ENCODE measurements at regions of chr14 and their contacts with region 1.

Region 1: DNA sequence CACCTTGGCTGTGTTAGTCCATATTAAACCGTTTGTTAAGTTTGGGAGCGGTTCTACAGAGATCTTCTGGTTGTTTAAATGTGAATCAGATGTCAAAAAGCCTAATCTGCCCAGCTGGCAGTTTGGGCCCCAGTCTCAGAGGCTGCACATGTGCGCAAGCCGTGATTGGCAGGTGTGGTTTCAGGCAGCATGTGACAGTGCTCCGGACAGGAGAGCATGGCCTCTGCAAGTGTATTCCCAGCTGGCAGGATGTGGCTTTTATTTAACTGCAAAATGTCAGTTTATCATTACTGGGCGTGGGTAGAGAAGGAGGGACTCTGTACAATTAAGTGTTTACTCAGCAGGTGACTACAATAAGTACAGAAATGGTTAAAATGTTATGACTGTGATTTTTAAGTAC is 77.5 kb downstream of the PELI2 start:
- DNase-seq: peak; percentile 95
- H3K4me3 ChIP-seq: peak overlapping the region; percentile 28
- H3K27ac ChIP-seq: peak overlapping the region; percentile 95
- H3K4me1 ChIP-seq: peaks cover 33% of the 10 kb centered on the region
- CTCF ChIP-seq: no peak

Region 2: GRCh38 chr14:56117765-56118610 is 77.7 kb before region 1 on chr14 and contains the start of gene PELI2:
- CTCF ChIA-PET with region 1: no interaction called
- POLR2A ChIA-PET with region 1: no interaction called
- intact Hi-C with region 1: loop called (anchors 2 kb)
- DNase-seq: peak; percentile 77
- H3K4me3 ChIP-seq: peak within 1 kb of the TSS; percentile 85
- H3K27ac ChIP-seq: no peak within 1 kb of the TSS
- H3K4me1 ChIP-seq: peaks cover 4% of the 10 kb centered on the region
- CTCF ChIP-seq: no peak
- total RNA-seq, gene PELI2: 3.2 and 3.8 TPM in 2 replicates

Region 3: DNA sequence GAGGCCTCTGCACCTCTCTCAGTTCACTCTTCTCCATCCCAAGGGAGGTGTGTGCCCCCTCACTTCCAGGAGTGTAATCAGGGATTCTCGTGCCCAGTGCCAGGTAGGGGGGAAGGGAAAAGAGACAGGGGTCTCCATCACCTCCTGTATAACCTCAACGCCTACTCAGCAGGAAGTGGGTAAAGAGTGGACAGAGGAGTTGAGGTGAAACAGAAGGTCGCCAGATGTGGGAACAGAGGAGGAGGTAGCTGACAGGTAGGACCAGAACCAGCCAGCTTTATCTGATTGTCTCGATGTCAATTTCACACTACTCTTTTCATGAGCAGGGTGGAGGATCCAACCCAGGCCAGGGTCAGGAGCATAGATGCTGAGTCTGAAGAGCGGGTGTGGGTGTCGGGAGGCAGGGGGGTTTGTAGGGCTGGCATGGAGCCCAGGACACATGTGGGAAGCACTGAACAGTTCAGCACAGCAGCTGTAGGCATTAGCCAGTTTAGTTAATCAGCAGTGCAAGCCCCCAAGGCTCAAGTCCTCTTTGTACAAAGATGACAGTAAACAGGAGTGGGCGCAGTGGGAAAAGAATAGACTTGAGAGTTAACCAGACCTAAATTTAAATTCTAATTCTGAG is 136.0 kb after region 1 on chr14:
- CTCF ChIA-PET with region 1: no interaction called
- POLR2A ChIA-PET with region 1: no interaction called
- intact Hi-C with region 1: no loop called
- DNase-seq: no peak
- H3K4me3 ChIP-seq: no peak overlapping the region
- H3K27ac ChIP-seq: no peak overlapping the region
- H3K4me1 ChIP-seq: no peaks in the 10 kb centered on the region
- CTCF ChIP-seq: no peak

Region 4: DNA sequence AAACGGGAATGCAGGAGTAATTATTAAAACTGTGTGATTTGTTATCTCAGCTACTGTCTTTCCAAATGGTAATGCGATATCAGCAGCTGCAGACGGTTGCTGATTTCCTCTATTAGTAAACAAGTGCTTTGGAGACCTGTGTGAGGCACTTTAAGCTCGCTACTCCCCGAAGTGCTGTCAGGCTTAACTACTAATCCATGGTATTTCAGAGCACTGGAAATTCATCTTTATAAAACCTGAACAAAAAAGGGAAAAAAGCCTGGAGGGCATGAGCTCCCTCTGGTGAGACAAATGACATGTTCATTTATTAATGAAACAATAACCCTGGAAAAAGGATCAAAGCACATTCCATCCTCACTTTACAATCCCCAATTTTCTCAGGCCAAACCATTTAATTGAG is 758.2 kb after region 1 on chr14:
- CTCF ChIA-PET with region 1: no interaction called
- POLR2A ChIA-PET with region 1: interaction called, 12 read pairs
- intact Hi-C with region 1: no loop called
- DNase-seq: no peak
- H3K4me3 ChIP-seq: no peak overlapping the region
- H3K27ac ChIP-seq: no peak overlapping the region
- H3K4me1 ChIP-seq: no peaks in the 10 kb centered on the region
- CTCF ChIP-seq: no peak